ENCODE measurements at regions of chr1 and their contacts with region 1.

Region 1: GRCh38 chr1:48498096-48498791 is 26.2 kb upstream of the SPATA6 start:
- DNase-seq: no peak
- ATAC-seq: peak; percentile 98
- H3K4me3 ChIP-seq: no peak overlapping the region
- H3K27ac ChIP-seq: no peak overlapping the region
- H3K4me1 ChIP-seq: no peaks in the 10 kb centered on the region
- H3K27me3 ChIP-seq: no peaks in the 10 kb centered on the region
- CTCF ChIP-seq: peak; percentile 77 to 93 (median 91)
- EP300 ChIP-seq: no peak
- POLR2A ChIP-seq: no peak
- RAD21 ChIP-seq: peak; percentile 37

Region 2: GRCh38 chr1:48109390-48110013 is 388.7 kb before region 1 on chr1:
- CTCF ChIA-PET with region 1: interaction called, 5 read pairs
- POLR2A ChIA-PET with region 1: no interaction called
- RAD21 ChIA-PET with region 1: no interaction called
- SMC1A ChIA-PET with region 1: interaction called, 3 read pairs
- in situ Hi-C with region 1: no loop called
- intact Hi-C with region 1: loop called (anchors 5 kb)
- DNase-seq: no peak
- ATAC-seq: peak; percentile 63
- H3K4me3 ChIP-seq: no peak overlapping the region
- H3K27ac ChIP-seq: no peak overlapping the region
- H3K4me1 ChIP-seq: no peaks in the 10 kb centered on the region
- H3K27me3 ChIP-seq: no peaks in the 10 kb centered on the region
- CTCF ChIP-seq: peak; percentile 71 to 83 (median 78); a peak in 5 of 6 replicates
- EP300 ChIP-seq: no peak
- POLR2A ChIP-seq: no peak
- RAD21 ChIP-seq: peak; percentile 85

Region 3: GRCh38 chr1:48688102-48688760 is 190.0 kb after region 1 on chr1:
- CTCF ChIA-PET with region 1: no interaction called
- POLR2A ChIA-PET with region 1: no interaction called
- RAD21 ChIA-PET with region 1: no interaction called
- SMC1A ChIA-PET with region 1: no interaction called
- in situ Hi-C with region 1: no loop called
- intact Hi-C with region 1: no loop called
- DNase-seq: no peak
- ATAC-seq: peak; percentile 86
- H3K4me3 ChIP-seq: no peak overlapping the region
- H3K27ac ChIP-seq: no peak overlapping the region
- H3K4me1 ChIP-seq: no peaks in the 10 kb centered on the region
- H3K27me3 ChIP-seq: no peaks in the 10 kb centered on the region
- CTCF ChIP-seq: peak; percentile 10 to 41 (median 28); a peak in 4 of 6 replicates
- EP300 ChIP-seq: no peak
- POLR2A ChIP-seq: no peak
- RAD21 ChIP-seq: peak; percentile 20; the same call in 1 of the 2 replicates